MCF 10A (cell line): ENCODE measurements at regions of chr4 and their contacts with region 1.

Region 1: GRCh38 chr4:54064295-54065111 is at the start of gene CHIC2:
- DNase-seq: peak; percentile 88
- H3K4me3 Mint-ChIP-seq: peak within 1 kb of the TSS; percentile 89
- H3K27ac Mint-ChIP-seq: peak within 1 kb of the TSS; percentile 97
- H3K4me1 Mint-ChIP-seq: peaks cover 44% of the 10 kb centered on the region
- H3K27me3 Mint-ChIP-seq: no peaks in the 10 kb centered on the region
- CTCF ChIP-seq: no peak
- total RNA-seq, gene CHIC2: 59.4 and 59.6 TPM in 2 replicates

Region 2: GRCh38 chr4:53861856-53862610 is 202.5 kb before region 1 on chr4:
- CTCF ChIA-PET with region 1: no interaction called
- POLR2A ChIA-PET with region 1: no interaction called
- intact Hi-C with region 1: no loop called
- DNase-seq: peak; percentile 84
- H3K4me3 Mint-ChIP-seq: no peak overlapping the region
- H3K27ac Mint-ChIP-seq: no peak overlapping the region
- H3K4me1 Mint-ChIP-seq: peaks cover 9% of the 10 kb centered on the region
- H3K27me3 Mint-ChIP-seq: no peaks in the 10 kb centered on the region
- CTCF ChIP-seq: no peak

Region 3: DNA sequence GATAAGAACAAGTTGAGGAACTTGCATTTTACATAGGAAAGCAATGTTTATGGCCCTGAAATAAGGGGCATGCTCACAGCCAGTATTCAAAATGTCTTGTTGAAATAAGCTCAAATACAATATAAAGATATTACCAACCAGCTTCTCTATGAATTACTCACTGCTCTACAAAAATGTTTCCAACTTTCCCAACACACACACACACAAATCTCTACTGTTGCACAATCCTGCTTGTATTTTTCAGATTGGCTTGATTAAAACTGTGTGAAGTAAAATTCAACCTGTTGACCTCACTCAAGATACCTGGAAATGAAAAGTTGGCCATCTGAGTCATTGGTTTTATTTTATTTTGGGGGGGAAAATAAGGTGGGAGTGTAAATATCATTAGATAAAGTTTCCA is 128.7 kb before region 1 on chr4:
- CTCF ChIA-PET with region 1: interaction called, 15 read pairs
- POLR2A ChIA-PET with region 1: interaction called, 15 read pairs
- intact Hi-C with region 1: loop called (anchors 5 kb)
- DNase-seq: peak; percentile 76
- H3K4me3 Mint-ChIP-seq: peak overlapping the region; percentile 25
- H3K27ac Mint-ChIP-seq: no peak overlapping the region
- H3K4me1 Mint-ChIP-seq: peaks cover 23% of the 10 kb centered on the region
- H3K27me3 Mint-ChIP-seq: no peaks in the 10 kb centered on the region
- CTCF ChIP-seq: no peak

Region 4: DNA sequence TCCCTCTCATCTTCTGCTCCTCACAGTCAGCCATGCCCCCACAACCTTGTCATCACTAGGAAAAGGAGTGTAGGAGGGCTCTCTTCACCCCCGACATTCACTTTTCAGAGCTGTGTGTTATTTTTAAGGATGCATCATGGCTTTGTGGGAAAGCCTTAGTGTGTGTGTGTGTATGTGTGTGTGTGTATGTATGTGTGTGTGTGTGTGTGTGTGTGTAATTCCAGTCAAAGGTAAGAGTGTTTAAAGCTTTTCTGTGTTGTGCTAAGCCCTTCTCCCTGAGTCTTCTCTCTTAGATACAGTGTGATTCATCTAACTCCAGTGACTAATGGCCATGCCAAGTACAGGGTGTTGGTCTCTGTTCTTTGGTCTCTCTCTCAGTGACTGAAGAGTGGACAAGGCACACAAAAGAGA is 76.7 kb before region 1 on chr4:
- CTCF ChIA-PET with region 1: interaction called, 3 read pairs
- POLR2A ChIA-PET with region 1: interaction called, 11 read pairs
- intact Hi-C with region 1: no loop called
- DNase-seq: peak; percentile 59
- H3K4me3 Mint-ChIP-seq: no peak overlapping the region
- H3K27ac Mint-ChIP-seq: peak overlapping the region; percentile 46
- H3K4me1 Mint-ChIP-seq: peaks cover 11% of the 10 kb centered on the region
- H3K27me3 Mint-ChIP-seq: no peaks in the 10 kb centered on the region
- CTCF ChIP-seq: no peak

Region 5: DNA sequence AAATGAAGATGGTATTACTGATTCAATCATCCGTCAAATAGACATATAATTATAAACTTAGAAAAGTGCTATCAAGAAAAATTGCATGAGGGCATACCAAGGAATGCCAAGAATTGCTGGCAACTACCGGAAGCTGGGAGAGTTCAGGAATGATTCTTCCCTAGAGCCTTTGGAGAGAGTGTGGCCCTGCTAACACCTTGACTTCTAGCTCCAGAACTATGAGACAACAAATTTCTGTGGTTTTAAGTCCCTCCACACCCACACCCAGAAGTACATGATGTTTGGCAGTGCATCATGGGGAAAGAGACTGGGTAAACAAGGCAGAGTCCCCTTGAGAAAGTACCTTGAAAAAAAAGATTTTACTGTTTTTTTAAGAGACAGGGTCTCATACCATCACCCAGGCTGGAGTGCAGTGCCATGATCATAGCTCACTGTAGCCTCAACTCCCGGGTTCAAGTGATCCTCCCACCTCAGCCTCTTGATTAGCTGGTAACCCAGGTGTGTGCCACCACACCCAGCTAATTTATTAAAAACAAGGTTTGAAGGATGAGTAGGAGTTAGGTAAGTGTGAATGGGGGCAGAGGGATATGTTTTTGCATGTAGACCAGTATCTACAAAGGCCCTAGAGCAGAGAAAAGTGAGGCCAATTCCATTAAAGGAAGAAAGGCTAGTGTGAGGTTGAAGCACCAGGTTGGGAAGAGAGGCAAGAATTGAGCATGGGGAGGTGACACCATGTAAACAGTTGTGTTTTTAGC is 88.5 kb after region 1 on chr4:
- CTCF ChIA-PET with region 1: interaction called, 4 read pairs
- POLR2A ChIA-PET with region 1: interaction called, 11 read pairs
- intact Hi-C with region 1: no loop called
- DNase-seq: peak; percentile 42
- H3K4me3 Mint-ChIP-seq: peak overlapping the region; percentile 17
- H3K27ac Mint-ChIP-seq: peak overlapping the region; percentile 98
- H3K4me1 Mint-ChIP-seq: peaks cover 30% of the 10 kb centered on the region
- H3K27me3 Mint-ChIP-seq: no peaks in the 10 kb centered on the region
- CTCF ChIP-seq: no peak

Region 6: GRCh38 chr4:54217642-54218495 is 153.4 kb after region 1 on chr4:
- CTCF ChIA-PET with region 1: interaction called, 4 read pairs
- POLR2A ChIA-PET with region 1: interaction called, 3 read pairs
- intact Hi-C with region 1: loop called (anchors 1 kb)
- DNase-seq: peak; percentile 91
- H3K4me3 Mint-ChIP-seq: peak overlapping the region; percentile 40
- H3K27ac Mint-ChIP-seq: no peak overlapping the region
- H3K4me1 Mint-ChIP-seq: peaks cover 14% of the 10 kb centered on the region
- H3K27me3 Mint-ChIP-seq: no peaks in the 10 kb centered on the region
- CTCF ChIP-seq: peak; percentile 77